ENCODE measurements at regions of chr2 and their contacts with region 1.

Region 1: GRCh38 chr2:36770542-36771287 is 74.2 kb downstream of the VIT start:
- DNase-seq: peak; percentile 67
- ATAC-seq: peak; percentile 60

Region 2: GRCh38 chr2:35365859-35366258 is 1404.9 kb before region 1 on chr2:
- intact Hi-C with region 1: no loop called
- DNase-seq: no peak
- ATAC-seq: no peak

Region 3: DNA sequence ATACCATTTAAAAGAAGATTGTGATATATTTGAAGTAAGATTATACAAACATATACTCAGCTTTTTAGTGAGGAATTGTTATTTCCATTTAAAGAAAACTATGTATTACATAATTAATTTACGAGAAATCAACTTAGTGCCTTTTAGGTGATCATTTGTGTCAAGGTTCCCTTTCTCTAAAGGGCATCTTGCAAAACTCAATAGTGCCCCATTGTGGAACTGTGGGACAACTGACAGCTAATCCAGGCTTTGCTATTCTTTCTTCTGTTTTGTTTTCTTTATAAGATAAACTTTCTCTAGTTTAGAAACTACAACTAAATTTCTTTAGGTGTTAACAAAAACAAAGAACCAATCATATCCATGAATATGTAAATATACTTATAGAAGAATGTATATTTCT is 98.5 kb before region 1 on chr2:
- intact Hi-C with region 1: no loop called
- DNase-seq: no peak
- ATAC-seq: no peak

Region 4: GRCh38 chr2:36708041-36708741 is 62.5 kb before region 1 on chr2:
- intact Hi-C with region 1: loop called (anchors 10 kb)
- DNase-seq: no peak
- ATAC-seq: peak; percentile 69